Pancreas (tissue), 10 donors: ENCODE measurements at regions of chr6 and their contacts with region 1.

Region 1: GRCh38 chr6:51541847-51542246 is 545.6 kb downstream of the PKHD1 start:
- DNase-seq: no peak
- ATAC-seq: peak in 1 of 4 donors; percentile 30
- H3K4me3 ChIP-seq: no peak overlapping the region
- H3K27ac ChIP-seq: no peak overlapping the region
- H3K4me1 ChIP-seq: no peaks in the 10 kb centered on the region
- H3K27me3 ChIP-seq: peaks cover 0 to 7% (median 0%) of the 10 kb centered on the region in 4 donors
- CTCF ChIP-seq: no peak

Region 2: GRCh38 chr6:50816115-50816675 is 725.7 kb before region 1 on chr6:
- intact Hi-C with region 1: loop called in 1 of 3 experiments (anchors 10 kb)
- DNase-seq: peak; percentile 49 to 80 (median 64)
- ATAC-seq: peak; percentile 81 to 93 (median 90)
- H3K4me3 ChIP-seq: peak overlapping the region; percentile 4 to 45 (median 30)
- H3K27ac ChIP-seq: no peak overlapping the region
- H3K4me1 ChIP-seq: peaks cover 0 to 15% (median 0%) of the 10 kb centered on the region in 3 donors
- H3K27me3 ChIP-seq: peaks cover 2 to 27% (median 17%) of the 10 kb centered on the region in 4 donors
- CTCF ChIP-seq: peak; percentile 63 to 81 (median 70)

Region 3: GRCh38 chr6:51598171-51598570 is 56.3 kb after region 1 on chr6:
- intact Hi-C with region 1: no loop called
- DNase-seq: peak in 3 of 6 donors; percentile 13 to 63 (median 49)
- ATAC-seq: no peak
- H3K4me3 ChIP-seq: no peak overlapping the region
- H3K27ac ChIP-seq: no peak overlapping the region
- H3K4me1 ChIP-seq: no peaks in the 10 kb centered on the region
- H3K27me3 ChIP-seq: no peaks in the 10 kb centered on the region
- CTCF ChIP-seq: no peak

Region 4: GRCh38 chr6:52953911-52954839 is 1412.3 kb after region 1 on chr6:
- intact Hi-C with region 1: no loop called
- DNase-seq: no peak
- ATAC-seq: no peak
- H3K4me3 ChIP-seq: no peak overlapping the region
- H3K27ac ChIP-seq: no peak overlapping the region
- H3K4me1 ChIP-seq: no peaks in the 10 kb centered on the region
- H3K27me3 ChIP-seq: no peaks in the 10 kb centered on the region
- CTCF ChIP-seq: no peak